ENCODE measurements at regions of chr5 and their contacts with region 1.

Region 1: DNA sequence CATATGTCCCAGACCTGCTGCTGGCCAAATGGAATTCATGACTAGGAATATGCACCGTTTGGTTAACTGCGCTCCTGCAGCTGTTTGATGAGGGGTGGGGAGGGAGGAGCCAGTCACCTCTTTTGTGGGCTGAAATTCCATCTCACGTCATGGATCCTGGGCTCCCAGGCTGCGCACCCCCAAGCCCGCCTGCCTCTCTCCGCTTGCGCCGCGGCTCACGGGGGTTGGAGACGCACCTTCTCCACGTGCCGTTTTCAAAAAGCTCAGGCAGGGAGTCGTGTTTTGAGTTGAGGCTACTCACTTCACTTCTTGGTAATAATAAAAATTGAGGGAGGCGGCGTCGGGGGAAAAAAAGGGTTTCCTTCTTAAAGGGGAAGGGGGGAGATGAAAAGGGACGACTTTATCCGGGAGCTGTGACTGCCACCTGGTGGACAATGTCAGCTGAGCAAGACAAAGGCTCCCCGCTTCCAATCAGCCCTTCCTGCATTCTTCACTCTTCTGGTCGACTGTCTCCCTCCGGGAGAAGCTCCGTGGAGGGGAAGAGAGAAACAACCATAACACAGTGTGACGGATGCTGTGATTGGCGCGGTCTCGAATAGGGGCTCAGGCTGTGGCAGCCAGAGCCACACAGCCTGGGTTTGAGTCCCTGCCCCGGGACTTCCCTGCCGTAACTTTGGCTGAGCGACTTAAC is 15.9 kb upstream of the C5orf47 start:
- DNase-seq: peak; percentile 95
- ATAC-seq: peak; percentile 44
- H3K4me3 ChIP-seq: peak overlapping the region; percentile 68
- H3K27ac ChIP-seq: peak overlapping the region; percentile 7; the same call in 1 of the 2 replicates
- H3K4me1 ChIP-seq: peaks cover 36% of the 10 kb centered on the region
- H3K27me3 ChIP-seq: no peaks in the 10 kb centered on the region
- CTCF ChIP-seq: peak; percentile 92

Region 2: GRCh38 chr5:173615884-173616576 is 357.0 kb before region 1 on chr5:
- CTCF ChIA-PET with region 1: interaction called, 15 read pairs
- POLR2A ChIA-PET with region 1: interaction called, 5 read pairs
- intact Hi-C with region 1: loop called (anchors 1 kb)
- DNase-seq: peak; percentile 79
- ATAC-seq: peak; percentile 62
- H3K4me3 ChIP-seq: peak overlapping the region; percentile 90
- H3K27ac ChIP-seq: peak overlapping the region; percentile 71
- H3K4me1 ChIP-seq: peaks cover 36% of the 10 kb centered on the region
- H3K27me3 ChIP-seq: no peaks in the 10 kb centered on the region
- CTCF ChIP-seq: peak; percentile 81

Region 3: DNA sequence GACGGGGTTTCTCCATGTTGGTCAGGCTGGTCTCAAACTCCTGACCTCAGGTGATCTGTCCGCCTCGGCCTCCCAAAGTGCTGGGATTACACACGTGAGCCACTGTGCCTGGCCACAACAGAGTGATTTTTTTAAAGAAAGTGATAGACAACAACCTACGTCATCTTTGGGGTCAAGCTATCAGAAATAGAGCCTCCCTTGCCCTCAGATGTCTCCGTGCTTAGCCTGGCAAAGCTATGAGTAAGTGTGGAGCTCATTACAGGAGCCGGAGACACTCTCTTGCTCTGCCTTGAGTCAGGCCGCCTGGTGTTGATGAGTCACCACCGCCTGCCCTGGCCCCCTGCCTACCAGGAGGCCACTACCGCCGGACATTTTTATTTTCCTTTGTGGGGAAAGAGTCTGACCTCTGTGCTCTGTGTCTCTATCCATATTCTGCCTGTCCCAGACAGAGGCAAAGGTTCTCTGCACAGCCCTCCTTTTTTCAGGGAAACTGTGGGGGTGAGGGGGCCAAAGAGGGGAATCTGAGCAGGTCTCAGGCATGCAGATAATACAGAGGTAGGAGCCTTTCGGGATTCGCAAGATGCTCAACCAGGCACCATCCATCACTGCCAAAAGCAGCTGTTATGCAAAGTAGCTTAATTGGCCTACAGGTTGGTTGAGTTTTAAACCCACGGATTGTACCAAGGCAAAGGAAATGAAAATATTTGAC is 208.6 kb before region 1 on chr5:
- CTCF ChIA-PET with region 1: interaction called, 4 read pairs
- POLR2A ChIA-PET with region 1: no interaction called
- intact Hi-C with region 1: loop called (anchors 1 kb)
- DNase-seq: peak; percentile 95
- ATAC-seq: peak; percentile 93
- H3K4me3 ChIP-seq: no peak overlapping the region
- H3K27ac ChIP-seq: peak overlapping the region; percentile 79
- H3K4me1 ChIP-seq: peaks cover 22% of the 10 kb centered on the region
- H3K27me3 ChIP-seq: no peaks in the 10 kb centered on the region
- CTCF ChIP-seq: no peak

Region 4: DNA sequence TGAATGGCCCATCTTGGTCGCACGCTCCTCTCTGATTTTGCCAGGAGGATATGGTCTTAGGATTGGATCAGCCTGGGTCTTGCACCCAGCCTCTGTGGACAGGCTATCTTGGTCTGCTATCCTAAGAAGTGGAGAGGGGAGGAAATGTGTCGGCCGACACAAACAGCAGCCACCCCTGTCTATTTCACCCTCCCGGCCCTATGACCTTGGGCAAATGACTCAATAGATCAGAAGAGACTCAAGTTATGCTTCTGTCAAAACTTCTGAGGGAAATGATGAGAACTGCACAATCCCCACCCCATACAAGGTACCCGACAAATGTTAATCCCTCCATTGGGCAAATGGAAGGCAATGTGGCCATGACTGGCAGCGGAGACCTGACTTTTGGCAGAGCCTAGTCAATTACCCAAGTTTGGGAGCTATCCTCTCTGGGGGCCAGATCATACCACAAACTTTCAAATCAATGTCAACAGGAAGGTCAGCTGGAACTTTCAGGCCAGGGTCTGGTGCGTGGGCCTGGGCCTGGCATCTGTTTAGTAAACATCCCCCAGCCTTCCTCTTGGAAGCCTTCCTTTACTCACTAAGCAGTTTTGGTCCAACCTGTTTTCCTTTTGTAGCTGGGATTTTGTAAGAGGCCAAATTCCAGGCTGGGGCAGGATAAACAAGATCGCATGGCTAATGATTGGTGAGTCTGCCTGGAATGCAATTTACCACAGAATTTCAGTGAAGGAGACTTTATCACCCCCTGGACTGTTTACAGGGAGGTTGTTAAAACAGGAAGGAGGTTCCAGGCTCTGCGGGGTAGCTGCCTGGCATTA is 149.2 kb before region 1 on chr5:
- CTCF ChIA-PET with region 1: no interaction called
- POLR2A ChIA-PET with region 1: no interaction called
- intact Hi-C with region 1: loop called (anchors 1 kb)
- DNase-seq: peak; percentile 98
- ATAC-seq: peak; percentile 90
- H3K4me3 ChIP-seq: peak overlapping the region; percentile 34; the same call in 1 of the 2 replicates
- H3K27ac ChIP-seq: peak overlapping the region; percentile 53
- H3K4me1 ChIP-seq: peaks cover 32% of the 10 kb centered on the region
- H3K27me3 ChIP-seq: no peaks in the 10 kb centered on the region
- CTCF ChIP-seq: no peak

Region 5: DNA sequence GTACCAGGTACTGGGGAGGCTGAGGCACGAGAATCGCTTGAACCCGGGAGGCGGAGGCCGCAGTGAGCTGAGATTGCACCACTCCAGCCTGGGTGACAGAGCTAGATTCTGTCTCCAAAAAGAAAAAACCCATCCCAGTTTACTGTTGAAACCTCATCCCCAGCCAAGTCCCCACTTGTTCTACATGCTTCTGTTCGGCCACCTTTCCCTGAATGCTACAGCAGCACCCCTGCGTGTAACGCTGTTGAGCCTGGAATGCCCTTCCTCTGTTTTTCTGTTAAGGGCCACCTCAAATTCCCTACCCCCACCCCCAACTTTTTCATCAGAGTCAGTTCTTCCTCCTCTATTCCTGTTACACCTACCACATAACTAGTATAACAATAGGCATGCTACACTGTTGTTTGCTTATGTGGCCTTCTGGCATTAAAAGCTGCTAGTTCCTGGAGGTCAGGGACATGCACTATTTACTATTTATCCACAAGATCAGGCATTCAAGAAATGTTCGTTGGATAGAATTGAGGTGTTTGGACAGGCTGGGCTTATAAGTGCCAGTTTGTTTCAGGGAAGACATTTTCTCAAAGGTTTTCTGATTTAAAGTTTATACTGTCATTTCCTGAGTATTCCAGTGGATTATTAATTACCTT is 31.2 kb before region 1 on chr5:
- CTCF ChIA-PET with region 1: interaction called, 3 read pairs
- POLR2A ChIA-PET with region 1: no interaction called
- intact Hi-C with region 1: loop called (anchors 1 kb)
- DNase-seq: peak; percentile 64
- ATAC-seq: peak; percentile 82
- H3K4me3 ChIP-seq: peak overlapping the region; percentile 28; the same call in 1 of the 2 replicates
- H3K27ac ChIP-seq: peak overlapping the region; percentile 56
- H3K4me1 ChIP-seq: peaks cover 43% of the 10 kb centered on the region
- H3K27me3 ChIP-seq: no peaks in the 10 kb centered on the region
- CTCF ChIP-seq: no peak

Region 6: GRCh38 chr5:173954671-173955521 is 18.2 kb before region 1 on chr5:
- CTCF ChIA-PET with region 1: no interaction called
- POLR2A ChIA-PET with region 1: no interaction called
- intact Hi-C with region 1: loop called (anchors 1 kb)
- DNase-seq: peak; percentile 50
- ATAC-seq: peak; percentile 53
- H3K4me3 ChIP-seq: no peak overlapping the region
- H3K27ac ChIP-seq: peak overlapping the region; percentile 71
- H3K4me1 ChIP-seq: peaks cover 33% of the 10 kb centered on the region
- H3K27me3 ChIP-seq: no peaks in the 10 kb centered on the region
- CTCF ChIP-seq: no peak